ENCODE measurements at regions of chr1 and their contacts with region 1.

Region 1: GRCh38 chr1:56578963-56579875 is at the start of gene PLPP3:
- DNase-seq: peak; percentile 83
- H3K4me3 ChIP-seq: peak within 1 kb of the TSS; percentile 59 to 98 (median 89)
- H3K27ac ChIP-seq: peak within 1 kb of the TSS; percentile 91 to 98 (median 95)
- H3K4me1 ChIP-seq: peaks cover 0 to 30% (median 22%) of the 10 kb centered on the region in 4 donors
- H3K27me3 ChIP-seq: no peaks in the 10 kb centered on the region
- CTCF ChIP-seq: peak; percentile 40 to 70 (median 49)
- EP300 ChIP-seq: no peak
- POLR2A ChIP-seq: peak; percentile 91
- total RNA-seq, gene PLPP3: 51.2 to 75.1 (median 63.3) TPM

Region 2: GRCh38 chr1:55140546-55140983 is 1438.7 kb before region 1 on chr1:
- in situ Hi-C with region 1: loop called in 3 of 4 experiments (anchors 25 kb)
- intact Hi-C with region 1: no loop called
- DNase-seq: peak; percentile 69
- H3K4me3 ChIP-seq: no peak overlapping the region
- H3K27ac ChIP-seq: peak overlapping the region in 3 of 4 donors; percentile 6 to 41 (median 24)
- H3K4me1 ChIP-seq: peaks cover 0 to 8% (median 1%) of the 10 kb centered on the region in 4 donors
- H3K27me3 ChIP-seq: no peaks in the 10 kb centered on the region
- CTCF ChIP-seq: peak; percentile 72 to 76 (median 74)
- EP300 ChIP-seq: no peak
- POLR2A ChIP-seq: no peak

Region 3: GRCh38 chr1:55386456-55386855 is 1192.8 kb before region 1 on chr1:
- in situ Hi-C with region 1: no loop called
- intact Hi-C with region 1: no loop called
- DNase-seq: no peak
- H3K4me3 ChIP-seq: no peak overlapping the region
- H3K27ac ChIP-seq: no peak overlapping the region
- H3K4me1 ChIP-seq: no peaks in the 10 kb centered on the region
- H3K27me3 ChIP-seq: no peaks in the 10 kb centered on the region
- CTCF ChIP-seq: no peak
- EP300 ChIP-seq: no peak
- POLR2A ChIP-seq: no peak

Region 4: GRCh38 chr1:55702064-55702463 is 877.2 kb before region 1 on chr1:
- in situ Hi-C with region 1: loop called in 1 of 4 experiments (anchors 25 kb)
- intact Hi-C with region 1: no loop called
- DNase-seq: no peak
- H3K4me3 ChIP-seq: no peak overlapping the region
- H3K27ac ChIP-seq: no peak overlapping the region
- H3K4me1 ChIP-seq: peaks cover 0 to 5% (median 2%) of the 10 kb centered on the region in 4 donors
- H3K27me3 ChIP-seq: no peaks in the 10 kb centered on the region
- CTCF ChIP-seq: peak; percentile 47 to 72 (median 57)
- EP300 ChIP-seq: no peak
- POLR2A ChIP-seq: no peak

Region 5: DNA sequence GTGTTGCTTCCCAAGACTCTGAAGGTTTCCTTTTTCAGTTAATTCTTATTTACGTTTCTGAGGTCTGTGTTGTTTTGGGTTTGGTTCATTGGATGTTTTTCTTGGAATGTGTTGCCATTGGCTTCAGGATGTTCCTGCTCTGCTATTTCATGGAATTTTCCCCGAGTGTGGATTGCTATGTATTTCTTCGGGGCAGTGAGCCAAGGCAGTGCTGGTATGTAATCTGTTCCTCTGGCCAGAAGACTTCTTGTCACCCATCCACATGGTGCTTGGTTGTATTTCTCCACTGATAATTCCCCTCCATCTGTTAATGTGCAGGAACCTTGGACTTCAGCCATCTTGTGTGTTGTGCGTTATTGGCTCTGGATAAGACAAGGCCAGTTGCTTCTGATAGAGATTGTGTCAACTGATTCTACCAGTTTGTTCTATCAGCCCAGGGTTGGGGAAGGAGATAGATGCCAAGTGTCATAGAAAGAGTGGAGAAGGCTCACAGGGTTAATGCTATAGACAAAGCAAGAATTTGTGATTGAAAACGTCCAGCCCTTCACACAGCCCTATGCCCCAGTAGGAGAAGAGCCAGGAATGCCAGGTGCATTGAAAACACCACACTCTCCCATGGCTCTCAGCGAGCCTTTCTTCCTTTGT is 505.1 kb before region 1 on chr1:
- in situ Hi-C with region 1: loop called in 1 of 4 experiments (anchors 25 kb)
- intact Hi-C with region 1: no loop called
- DNase-seq: peak; percentile 50
- H3K4me3 ChIP-seq: no peak overlapping the region
- H3K27ac ChIP-seq: peak overlapping the region; percentile 40 to 63 (median 48)
- H3K4me1 ChIP-seq: peaks cover 0 to 3% (median 1%) of the 10 kb centered on the region in 4 donors
- H3K27me3 ChIP-seq: no peaks in the 10 kb centered on the region
- CTCF ChIP-seq: no peak
- EP300 ChIP-seq: no peak
- POLR2A ChIP-seq: no peak

Region 6: DNA sequence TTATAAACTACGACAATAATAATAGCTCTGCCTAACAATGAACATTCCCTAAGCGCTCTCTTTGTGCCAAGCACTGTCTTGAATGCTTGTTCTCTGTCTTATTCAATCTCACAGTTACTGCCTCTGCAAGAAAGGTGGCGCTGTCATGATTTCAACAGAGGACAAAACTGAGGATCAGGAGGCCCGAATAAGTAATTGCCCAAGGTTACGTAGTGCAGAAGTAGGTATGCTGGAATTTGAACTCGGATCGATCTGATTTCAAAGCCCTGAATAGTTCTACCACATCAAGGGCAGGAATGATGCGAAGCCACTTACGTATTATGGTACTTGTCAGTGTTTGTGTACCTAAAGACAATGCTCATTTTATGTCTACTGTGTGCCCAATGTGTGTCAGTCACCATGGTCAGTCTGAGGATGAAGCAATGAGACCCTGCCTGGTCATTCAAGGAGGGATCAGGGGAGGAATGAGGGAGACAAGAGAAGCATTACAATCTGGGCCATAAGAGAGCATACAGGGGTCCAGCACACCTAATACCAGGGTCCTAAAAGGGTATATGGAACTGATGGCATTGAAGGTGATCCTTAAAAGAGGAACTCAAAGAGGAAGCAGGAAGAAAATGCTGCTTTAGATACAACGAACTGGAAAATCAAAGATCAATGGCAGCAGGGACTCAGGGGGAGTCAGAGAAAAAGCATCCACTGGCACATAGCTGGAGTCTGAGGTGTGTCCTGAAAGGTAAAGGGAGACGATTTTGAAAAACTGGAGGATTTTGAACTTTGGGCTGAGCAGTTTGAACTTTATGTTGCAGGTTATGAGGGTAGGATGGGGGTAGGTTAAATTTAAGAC is 389.1 kb before region 1 on chr1:
- in situ Hi-C with region 1: no loop called
- intact Hi-C with region 1: loop called (anchors 10 kb)
- DNase-seq: no peak
- H3K4me3 ChIP-seq: no peak overlapping the region
- H3K27ac ChIP-seq: no peak overlapping the region
- H3K4me1 ChIP-seq: peaks cover 0 to 8% (median 0%) of the 10 kb centered on the region in 4 donors
- H3K27me3 ChIP-seq: no peaks in the 10 kb centered on the region
- CTCF ChIP-seq: peak in 1 of 5 experiments; percentile 3
- EP300 ChIP-seq: no peak
- POLR2A ChIP-seq: no peak

Region 7: DNA sequence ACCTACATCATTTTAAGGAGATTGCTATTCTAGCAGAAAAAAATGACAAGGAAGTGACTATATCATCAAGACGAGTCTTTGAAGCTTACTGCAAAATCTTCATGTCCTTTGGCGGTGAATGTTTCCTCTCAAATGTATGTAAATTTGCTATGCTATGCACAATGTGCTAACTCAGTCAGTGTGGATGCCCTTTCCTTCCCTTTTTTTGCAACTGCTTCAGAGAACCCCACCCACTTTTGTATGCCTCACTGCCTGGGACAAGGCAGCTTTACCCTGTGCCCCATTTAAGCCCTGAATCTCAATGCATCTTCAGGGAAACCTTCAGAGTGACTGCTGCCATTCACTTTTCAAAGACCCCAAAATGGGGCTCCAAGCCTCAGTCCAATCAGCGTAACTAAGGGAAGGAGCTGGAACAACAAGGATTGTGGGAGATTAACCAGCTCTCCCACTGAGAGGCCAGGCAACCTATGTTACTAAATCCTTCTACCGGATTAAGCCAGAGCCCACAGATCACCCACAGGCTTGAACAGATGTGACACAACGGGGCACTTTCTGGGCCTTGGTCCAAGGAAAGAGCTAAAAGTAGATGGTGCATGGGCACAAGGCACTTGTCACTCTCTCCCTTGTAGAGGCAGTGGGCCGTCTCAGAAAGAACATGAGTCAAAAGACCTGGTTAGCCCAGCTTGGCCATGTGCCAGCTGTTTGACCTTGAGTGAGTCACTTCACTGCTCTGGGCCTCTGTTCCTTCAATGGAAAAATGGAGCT is 154.3 kb before region 1 on chr1:
- in situ Hi-C with region 1: loop called in 1 of 4 experiments (anchors 25 kb)
- intact Hi-C with region 1: no loop called
- DNase-seq: no peak
- H3K4me3 ChIP-seq: no peak overlapping the region
- H3K27ac ChIP-seq: no peak overlapping the region
- H3K4me1 ChIP-seq: no peaks in the 10 kb centered on the region
- H3K27me3 ChIP-seq: no peaks in the 10 kb centered on the region
- CTCF ChIP-seq: no peak
- EP300 ChIP-seq: no peak
- POLR2A ChIP-seq: no peak

Region 8: DNA sequence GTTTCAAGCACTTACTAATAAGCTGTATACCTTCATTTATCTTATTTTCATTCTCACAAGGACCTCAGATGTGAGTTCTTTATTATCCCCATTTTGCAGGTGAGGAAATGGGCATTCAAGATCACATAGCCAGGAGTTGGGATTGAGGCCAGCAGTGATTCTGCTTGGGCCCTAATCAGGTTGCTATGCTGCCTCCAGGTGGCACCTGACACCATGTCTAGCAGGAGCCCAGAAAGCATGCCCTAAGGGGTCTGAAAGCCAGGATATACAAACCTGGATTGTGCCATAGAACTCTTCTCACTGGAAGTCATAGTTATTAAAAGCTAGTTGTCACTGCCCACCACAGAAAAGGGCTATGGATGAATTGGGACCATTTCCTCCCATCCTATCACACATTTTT is 178.9 kb after region 1 on chr1:
- in situ Hi-C with region 1: no loop called
- intact Hi-C with region 1: no loop called
- DNase-seq: peak; percentile 27
- H3K4me3 ChIP-seq: no peak overlapping the region
- H3K27ac ChIP-seq: no peak overlapping the region
- H3K4me1 ChIP-seq: no peaks in the 10 kb centered on the region
- H3K27me3 ChIP-seq: no peaks in the 10 kb centered on the region
- CTCF ChIP-seq: peak in 2 of 5 experiments; percentile 29 to 36
- EP300 ChIP-seq: no peak
- POLR2A ChIP-seq: no peak